HCT116 (cell line): ENCODE measurements at regions of chr16 and their contacts with region 1.

Region 1: GRCh38 chr16:3029537-3030402 is 5.9 kb downstream of the THOC6 start:
- DNase-seq: no peak
- ATAC-seq: no peak
- H3K4me3 ChIP-seq: no peak overlapping the region
- H3K27ac ChIP-seq: no peak overlapping the region
- H3K4me1 ChIP-seq: peaks cover 4 to 39% of the 10 kb centered on the region in 2 experiments; a peak in 3 of 4 replicates
- H3K27me3 ChIP-seq: no peaks in the 10 kb centered on the region
- CTCF ChIP-seq: no peak
- POLR2A ChIP-seq: no peak
- RAD21 ChIP-seq: no peak

Region 2: GRCh38 chr16:3003582-3004302 is 26.0 kb before region 1 on chr16:
- CTCF ChIA-PET with region 1: interaction called, 29 read pairs
- POLR2A ChIA-PET with region 1: interaction called, 188 read pairs
- RAD21 ChIA-PET with region 1: interaction called, 7 to 8 read pairs
- intact Hi-C with region 1: loop called (anchors 2 kb)
- DNase-seq: peak; percentile 99
- ATAC-seq: peak; percentile 93
- H3K4me3 ChIP-seq: 0 out of 4 replicates have a peak overlapping the region, but pooled peaks of 1 of the 2 experiments have one; percentile 18
- H3K27ac ChIP-seq: no peak overlapping the region
- H3K4me1 ChIP-seq: peaks cover 23 to 47% of the 10 kb centered on the region in 2 experiments
- H3K27me3 ChIP-seq: no peaks in the 10 kb centered on the region
- CTCF ChIP-seq: peak in 2 of 3 experiments; percentile 43 to 52; a peak in 3 of 6 replicates
- POLR2A ChIP-seq: no peak
- RAD21 ChIP-seq: no peak

Region 3: DNA sequence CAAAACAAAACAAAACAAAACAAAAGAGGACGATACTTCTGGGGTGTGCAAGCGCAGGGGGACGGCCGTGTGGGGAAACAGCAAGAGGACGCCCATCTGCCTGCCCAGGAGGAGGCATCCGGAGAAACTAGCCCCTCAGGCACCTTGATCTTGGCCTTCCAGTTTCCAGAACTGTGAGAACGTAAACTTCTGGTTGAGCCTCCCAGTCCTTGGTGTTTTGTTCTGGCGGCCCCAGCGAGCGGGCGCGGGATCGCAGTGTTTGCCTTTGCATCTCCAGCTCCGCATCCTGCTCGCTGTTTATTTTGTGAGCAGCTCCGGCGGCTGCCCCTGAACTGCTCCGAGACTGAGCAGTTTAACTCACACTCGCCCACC is 15.6 kb after region 1 on chr16:
- CTCF ChIA-PET with region 1: interaction called, 20 read pairs
- POLR2A ChIA-PET with region 1: interaction called, 4 read pairs
- RAD21 ChIA-PET with region 1: no interaction called
- intact Hi-C with region 1: no loop called
- DNase-seq: no peak
- ATAC-seq: peak; percentile 52
- H3K4me3 ChIP-seq: peak overlapping the region; percentile 56 to 79
- H3K27ac ChIP-seq: no peak overlapping the region
- H3K4me1 ChIP-seq: peaks cover 10 to 56% of the 10 kb centered on the region in 2 experiments
- H3K27me3 ChIP-seq: no peaks in the 10 kb centered on the region
- CTCF ChIP-seq: no peak
- POLR2A ChIP-seq: no peak
- RAD21 ChIP-seq: no peak

Region 4: DNA sequence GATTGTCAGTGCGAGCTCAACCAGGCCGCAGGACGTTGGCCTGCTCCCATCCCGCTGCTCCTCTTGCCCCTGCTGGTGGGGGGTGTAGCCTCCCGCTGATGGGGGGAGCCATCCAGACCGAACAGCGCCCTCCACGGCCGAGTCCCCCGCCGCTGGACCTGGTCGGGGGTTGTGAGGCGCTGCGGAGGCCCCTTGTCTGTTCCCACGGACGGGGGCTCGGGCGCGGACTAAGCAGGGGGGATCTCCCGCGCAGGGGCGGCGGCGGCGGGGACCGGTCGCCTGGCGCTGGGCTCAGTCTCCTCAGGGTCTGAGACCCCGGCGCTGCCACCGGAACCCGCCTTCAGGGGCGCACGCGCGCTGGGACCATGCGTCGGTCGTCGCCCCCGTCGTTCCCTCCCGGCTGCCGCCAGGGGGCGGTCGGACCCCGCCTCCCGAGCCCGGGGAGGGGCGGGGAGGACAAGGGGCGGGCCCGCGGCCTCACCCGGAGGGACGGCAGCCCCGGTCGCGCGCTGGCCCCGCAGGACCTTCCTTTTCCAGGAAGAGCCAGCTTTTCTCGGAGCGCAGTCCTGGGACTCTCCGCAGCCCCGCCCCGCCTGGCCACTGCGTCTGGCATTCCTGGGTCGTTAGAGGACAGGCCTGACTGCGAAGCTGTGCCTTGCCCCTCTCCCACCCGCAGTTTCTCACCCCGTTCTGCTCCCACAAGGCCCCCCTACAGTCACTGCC is 29.4 kb after region 1 on chr16:
- CTCF ChIA-PET with region 1: interaction called, 11 read pairs
- POLR2A ChIA-PET with region 1: no interaction called
- RAD21 ChIA-PET with region 1: interaction called in 1 of 2 experiments, 5 read pairs
- intact Hi-C with region 1: no loop called
- DNase-seq: peak; percentile 60
- ATAC-seq: peak; percentile 86
- H3K4me3 ChIP-seq: peak overlapping the region; percentile 81 to 87
- H3K27ac ChIP-seq: peak overlapping the region; percentile 84
- H3K4me1 ChIP-seq: peaks cover 0 to 22% of the 10 kb centered on the region in 2 experiments; a peak in 3 of 4 replicates
- H3K27me3 ChIP-seq: no peaks in the 10 kb centered on the region
- CTCF ChIP-seq: peak; percentile 58 to 94 (median 66)
- POLR2A ChIP-seq: no peak
- RAD21 ChIP-seq: peak; percentile 89